Colonic mucosa (tissue), 4 donors: ENCODE measurements at regions of chr2 and their contacts with region 1.

Region 1: DNA sequence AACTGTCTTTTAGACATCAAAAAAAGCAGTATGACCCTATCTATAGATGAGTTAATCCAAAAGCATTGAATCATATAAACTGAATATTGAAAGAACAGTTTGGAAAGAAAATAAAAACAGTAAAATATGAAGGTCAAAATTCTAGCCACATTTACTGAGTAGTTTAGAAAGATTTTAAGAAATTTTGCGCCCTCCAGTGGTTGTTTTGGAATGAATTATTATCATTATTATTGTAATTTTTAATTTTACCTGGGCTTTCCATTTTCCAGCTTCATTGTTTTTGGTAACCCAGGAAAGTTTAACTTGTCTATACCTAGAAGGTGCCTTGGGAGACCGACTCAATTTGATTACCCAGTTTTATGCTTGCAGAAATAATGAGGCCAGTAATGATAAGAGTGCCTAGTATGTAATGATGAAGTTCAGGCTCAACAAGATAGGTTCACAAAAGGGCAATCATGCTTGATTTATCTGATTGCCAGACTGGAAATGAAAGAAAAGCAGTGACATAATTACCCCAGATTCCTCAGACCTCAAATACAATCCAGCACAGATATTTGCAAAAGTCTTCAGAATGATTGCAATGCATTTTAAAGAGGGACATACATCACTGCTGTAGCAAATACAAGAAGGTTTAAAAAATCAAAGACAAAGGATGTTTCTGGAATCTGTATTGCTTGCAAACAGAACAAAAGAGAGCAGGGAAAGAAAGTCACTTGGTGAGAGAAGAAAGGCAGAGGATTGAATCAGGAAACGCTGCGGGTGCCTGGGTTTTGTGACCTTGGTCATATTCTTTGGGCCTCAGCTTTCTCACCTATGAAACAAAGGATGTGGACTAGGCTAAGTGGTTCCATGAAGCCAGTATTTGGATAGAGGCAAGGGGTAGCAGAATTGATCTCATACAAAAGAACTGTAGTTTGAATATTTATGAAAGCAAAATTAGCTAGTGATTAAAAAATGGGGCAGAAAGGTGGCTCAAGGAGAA is 153.8 kb downstream of the MAP2 start:
- DNase-seq: no peak
- H3K4me3 ChIP-seq: no peak overlapping the region
- H3K27ac ChIP-seq: no peak overlapping the region
- H3K4me1 ChIP-seq: no peaks in the 10 kb centered on the region
- H3K27me3 ChIP-seq: no peaks in the 10 kb centered on the region
- CTCF ChIP-seq: peak; percentile 10

Region 2: GRCh38 chr2:209334198-209335017 is 243.3 kb before region 1 on chr2:
- intact Hi-C with region 1: loop called (anchors 10 kb)
- DNase-seq: peak; percentile 33
- H3K4me3 ChIP-seq: no peak overlapping the region
- H3K27ac ChIP-seq: no peak overlapping the region
- H3K4me1 ChIP-seq: no peaks in the 10 kb centered on the region
- H3K27me3 ChIP-seq: no peaks in the 10 kb centered on the region
- CTCF ChIP-seq: peak; percentile 82

Region 3: DNA sequence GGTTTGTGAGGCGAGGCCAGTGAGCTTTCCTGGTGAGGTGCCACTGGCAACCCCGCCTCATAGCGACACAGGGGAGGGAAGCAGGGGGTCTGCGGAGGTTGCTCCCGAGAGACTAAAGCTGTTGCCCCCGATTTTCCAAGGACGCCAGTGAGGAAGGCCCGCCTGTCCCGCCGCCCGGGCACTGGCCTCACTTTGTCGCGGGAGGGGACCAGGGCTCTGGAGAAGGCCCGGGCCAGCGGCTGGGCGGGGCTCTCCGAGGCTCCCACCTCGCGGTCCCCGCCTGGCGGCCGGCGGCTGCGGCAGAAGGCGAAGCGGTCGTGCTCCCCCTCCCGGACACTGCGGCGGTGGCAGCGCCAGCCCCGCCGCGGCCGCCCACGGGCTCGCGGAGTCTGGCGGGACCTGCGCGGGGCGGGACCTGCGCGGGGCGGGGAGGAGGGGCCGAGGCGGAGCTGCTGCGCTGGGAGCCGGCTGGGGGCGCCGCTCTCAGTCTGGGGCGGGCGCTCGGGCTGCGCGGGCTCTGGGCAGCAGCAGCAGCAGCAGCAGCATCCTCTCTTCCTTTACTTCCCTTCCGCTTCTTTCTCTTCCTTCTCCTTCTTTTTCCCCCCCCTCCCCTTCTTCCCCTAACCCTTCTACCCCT is 154.0 kb before region 1 on chr2 and contains the start of gene MAP2:
- intact Hi-C with region 1: loop called (anchors 10 kb)
- DNase-seq: peak; percentile 62
- H3K4me3 ChIP-seq: peak within 1 kb of the TSS; percentile 40
- H3K27ac ChIP-seq: no peak within 1 kb of the TSS
- H3K4me1 ChIP-seq: no peaks in the 10 kb centered on the region
- H3K27me3 ChIP-seq: no peaks in the 10 kb centered on the region
- CTCF ChIP-seq: peak; percentile 39
- total RNA-seq, gene MAP2: 0.84 to 1.4 TPM